Panc1 (cell line): ENCODE measurements at regions of chr17 and their contacts with region 1.

Region 1: DNA sequence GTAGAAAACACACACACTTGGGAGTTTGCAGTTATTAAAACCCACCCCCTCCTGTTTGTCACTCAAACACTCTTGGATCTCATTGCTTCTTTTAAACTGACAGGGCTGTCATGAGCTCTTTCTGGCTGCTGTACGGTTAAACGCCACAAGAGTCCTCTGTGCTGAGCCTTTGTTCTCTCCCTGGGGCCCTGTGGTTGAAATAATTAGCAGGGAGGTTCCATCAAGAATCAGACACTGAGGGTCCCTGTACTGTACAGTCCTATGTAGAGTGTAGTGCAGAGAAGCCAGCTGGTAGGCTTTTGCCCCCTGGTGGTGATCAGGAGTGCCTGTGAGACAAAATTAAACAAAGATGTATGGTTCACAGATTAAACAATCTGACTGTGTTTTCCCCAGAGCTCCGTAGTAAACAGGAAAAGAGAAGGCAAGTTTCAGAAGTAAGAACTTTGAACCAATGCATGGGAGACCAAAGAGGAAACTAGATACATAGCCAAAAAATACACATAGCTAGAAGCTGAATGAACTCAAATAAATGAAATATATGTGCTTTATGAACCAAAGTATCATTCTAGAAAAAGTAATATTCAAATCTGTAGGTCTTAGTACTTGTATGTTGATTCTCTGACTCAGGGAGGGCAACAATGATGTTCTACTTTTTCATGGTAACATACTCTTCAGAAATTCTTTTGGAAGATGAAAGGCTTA is 1.4 kb upstream of the SSH2 start:
- DNase-seq: peak; percentile 64
- ATAC-seq: peak; percentile 69
- H3K4me3 ChIP-seq: peak overlapping the region; percentile 87 to 95
- H3K27ac ChIP-seq: peak overlapping the region; percentile 92
- H3K4me1 ChIP-seq: peaks cover 41% of the 10 kb centered on the region
- H3K27me3 ChIP-seq: no peaks in the 10 kb centered on the region
- CTCF ChIP-seq: peak; percentile 93

Region 2: GRCh38 chr17:29331708-29332085 is 599.7 kb before region 1 on chr17:
- CTCF ChIA-PET with region 1: no interaction called
- POLR2A ChIA-PET with region 1: no interaction called
- in situ Hi-C with region 1: no loop called
- intact Hi-C with region 1: no loop called
- DNase-seq: no peak
- ATAC-seq: 0 out of 2 replicates have a peak, but pooled peaks have one; percentile 21
- H3K4me3 ChIP-seq: no peak overlapping the region
- H3K27ac ChIP-seq: no peak overlapping the region
- H3K4me1 ChIP-seq: no peaks in the 10 kb centered on the region
- H3K27me3 ChIP-seq: no peaks in the 10 kb centered on the region
- CTCF ChIP-seq: no peak

Region 3: DNA sequence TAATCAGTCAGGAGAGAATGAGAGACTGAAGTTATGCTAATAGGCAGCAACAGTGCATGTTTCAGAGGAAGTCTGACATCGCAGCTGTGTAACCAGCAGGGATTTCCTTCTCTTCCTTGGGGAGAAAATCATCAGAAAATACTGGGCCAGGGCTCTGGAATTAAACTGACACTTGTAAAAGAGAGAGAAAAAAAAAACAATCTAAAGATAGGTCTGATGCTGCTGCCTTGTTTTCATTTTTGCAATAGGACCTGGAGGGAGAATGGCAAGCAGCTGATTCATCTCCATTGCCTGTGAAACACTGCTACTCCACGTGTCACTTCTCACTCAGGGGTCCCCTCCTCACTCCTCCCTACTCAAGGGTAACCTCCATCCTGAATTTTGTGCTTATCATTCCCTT is 291.0 kb before region 1 on chr17:
- CTCF ChIA-PET with region 1: interaction called, 29 read pairs
- POLR2A ChIA-PET with region 1: interaction called, 5 read pairs
- in situ Hi-C with region 1: no loop called
- intact Hi-C with region 1: loop called (anchors 1 kb)
- DNase-seq: no peak
- ATAC-seq: no peak
- H3K4me3 ChIP-seq: no peak overlapping the region
- H3K27ac ChIP-seq: no peak overlapping the region
- H3K4me1 ChIP-seq: peaks cover 6% of the 10 kb centered on the region; the same call in 1 of the 2 replicates
- H3K27me3 ChIP-seq: no peaks in the 10 kb centered on the region
- CTCF ChIP-seq: no peak

Region 4: DNA sequence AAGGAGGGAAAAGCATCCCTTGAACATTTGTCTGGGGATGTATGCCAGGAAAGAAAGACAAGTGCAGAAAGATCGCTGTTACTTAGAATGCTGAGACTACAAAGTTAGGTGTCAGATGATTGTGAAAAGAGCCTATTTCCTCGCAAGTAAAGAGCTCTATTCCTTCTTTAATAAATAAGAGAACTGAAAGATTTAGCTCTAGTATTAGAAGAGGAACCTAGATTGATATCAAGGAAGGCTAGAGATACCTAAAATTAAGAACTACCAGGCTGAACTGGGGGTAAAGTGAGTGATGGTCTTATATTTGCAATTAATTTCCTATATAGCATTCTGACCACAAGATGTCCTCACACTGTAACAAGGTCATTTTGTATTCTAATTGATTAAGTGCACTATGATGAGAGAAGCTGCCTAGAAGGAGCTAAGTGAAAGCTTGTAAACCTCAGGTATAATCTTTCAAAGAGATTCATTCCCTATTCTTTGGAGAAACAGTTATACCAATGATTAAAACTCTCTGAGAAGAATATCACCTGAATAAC is 63.7 kb before region 1 on chr17:
- CTCF ChIA-PET with region 1: interaction called, 14 read pairs
- POLR2A ChIA-PET with region 1: interaction called, 3 read pairs
- in situ Hi-C with region 1: no loop called
- intact Hi-C with region 1: no loop called
- DNase-seq: no peak
- ATAC-seq: no peak
- H3K4me3 ChIP-seq: no peak overlapping the region
- H3K27ac ChIP-seq: no peak overlapping the region
- H3K4me1 ChIP-seq: no peaks in the 10 kb centered on the region; the same call in none of the 2 replicates
- H3K27me3 ChIP-seq: no peaks in the 10 kb centered on the region
- CTCF ChIP-seq: peak; percentile 44; the same call in 1 of the 2 replicates

Region 5: GRCh38 chr17:30000001-30000754 is 68.8 kb after region 1 on chr17:
- CTCF ChIA-PET with region 1: interaction called, 8 read pairs
- POLR2A ChIA-PET with region 1: no interaction called
- in situ Hi-C with region 1: no loop called
- intact Hi-C with region 1: loop called (anchors 5 kb)
- DNase-seq: no peak
- ATAC-seq: peak; percentile 65
- H3K4me3 ChIP-seq: no peak overlapping the region
- H3K27ac ChIP-seq: no peak overlapping the region
- H3K4me1 ChIP-seq: peaks cover 13% of the 10 kb centered on the region
- H3K27me3 ChIP-seq: no peaks in the 10 kb centered on the region; the same call in 1 of the 2 replicates
- CTCF ChIP-seq: peak; percentile 29; the same call in 1 of the 2 replicates

Region 6: GRCh38 chr17:30093463-30094147 is 162.2 kb after region 1 on chr17:
- CTCF ChIA-PET with region 1: interaction called, 19 read pairs
- POLR2A ChIA-PET with region 1: interaction called, 15 read pairs
- in situ Hi-C with region 1: no loop called
- intact Hi-C with region 1: loop called (anchors 5 kb)
- DNase-seq: peak; percentile 42
- ATAC-seq: peak; percentile 92
- H3K4me3 ChIP-seq: no peak overlapping the region
- H3K27ac ChIP-seq: no peak overlapping the region
- H3K4me1 ChIP-seq: peaks cover 3% of the 10 kb centered on the region; the same call in 1 of the 2 replicates
- H3K27me3 ChIP-seq: no peaks in the 10 kb centered on the region
- CTCF ChIP-seq: peak; percentile 84

Region 7: GRCh38 chr17:30235386-30236296 is 304.3 kb after region 1 on chr17 and contains the start of gene SLC6A4:
- CTCF ChIA-PET with region 1: no interaction called
- POLR2A ChIA-PET with region 1: no interaction called
- in situ Hi-C with region 1: no loop called
- intact Hi-C with region 1: no loop called
- DNase-seq: no peak
- ATAC-seq: peak; percentile 40; the same call in 1 of the 2 replicates
- H3K4me3 ChIP-seq: peak within 1 kb of the TSS; percentile 47 to 63
- H3K27ac ChIP-seq: no peak within 1 kb of the TSS
- H3K4me1 ChIP-seq: peaks cover 20% of the 10 kb centered on the region
- H3K27me3 ChIP-seq: peaks cover 17% of the 10 kb centered on the region
- CTCF ChIP-seq: no peak
- total RNA-seq, gene SLC6A4: not detected